ENCODE measurements at regions of chr1 and their contacts with region 1.

Region 1: GRCh38 chr1:6438047-6438525 is 13.5 kb downstream of the ESPN start:
- DNase-seq: peak; percentile 88
- H3K4me3 ChIP-seq: no peak overlapping the region; a peak in 1 of 4 replicates
- H3K27ac ChIP-seq: no peak overlapping the region
- H3K4me1 ChIP-seq: no peaks in the 10 kb centered on the region; a peak in 1 of 4 replicates
- H3K27me3 ChIP-seq: no peaks in the 10 kb centered on the region
- CTCF ChIP-seq: peak; percentile 83
- EP300 ChIP-seq: no peak
- RAD21 ChIP-seq: peak; percentile 70

Region 2: DNA sequence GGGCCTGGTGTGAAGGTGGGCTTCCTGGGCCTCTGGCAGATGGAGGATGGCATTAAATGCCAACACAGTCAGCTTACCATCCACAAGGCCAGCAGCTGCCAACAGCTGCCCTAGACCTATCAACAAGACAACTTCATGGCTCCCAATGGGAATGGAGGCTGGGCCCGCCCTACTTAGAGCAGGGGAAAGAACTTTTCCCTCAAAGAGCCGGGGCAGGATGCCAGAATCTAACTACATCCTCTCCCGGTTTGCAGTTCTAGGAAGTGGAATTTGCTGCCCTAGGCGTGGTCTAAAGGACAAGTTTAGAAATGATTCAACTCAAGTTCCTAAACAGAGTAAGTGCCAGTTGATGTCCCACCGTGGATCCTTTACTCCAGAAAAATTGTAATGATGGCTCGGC is 215.4 kb before region 1 on chr1:
- CTCF ChIA-PET with region 1: no interaction called
- POLR2A ChIA-PET with region 1: no interaction called
- DNase-seq: no peak
- H3K4me3 ChIP-seq: no peak overlapping the region
- H3K27ac ChIP-seq: no peak overlapping the region
- H3K4me1 ChIP-seq: no peaks in the 10 kb centered on the region
- H3K27me3 ChIP-seq: no peaks in the 10 kb centered on the region
- CTCF ChIP-seq: no peak
- EP300 ChIP-seq: no peak
- RAD21 ChIP-seq: no peak

Region 3: DNA sequence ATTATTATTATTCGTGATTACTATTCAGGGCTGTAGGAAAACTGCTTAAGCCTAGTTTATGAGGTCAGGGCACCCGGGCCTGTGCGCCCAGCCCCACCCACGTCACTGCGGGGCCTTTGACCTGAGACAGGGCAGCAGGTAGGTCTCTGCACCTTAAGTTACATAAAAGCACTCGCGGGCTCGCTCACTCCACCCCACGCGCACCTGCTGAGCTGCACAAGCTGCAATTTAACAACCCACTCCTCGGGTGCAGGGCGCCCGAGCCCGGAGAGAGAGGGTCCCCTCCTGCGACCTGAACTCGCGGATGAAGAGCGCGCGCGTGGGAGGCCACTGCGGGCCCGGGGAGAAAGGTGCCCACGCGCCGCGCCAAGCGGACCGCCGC is 202.8 kb before region 1 on chr1:
- CTCF ChIA-PET with region 1: interaction called, 19 read pairs
- POLR2A ChIA-PET with region 1: no interaction called
- DNase-seq: no peak
- H3K4me3 ChIP-seq: peak overlapping the region; percentile 66 to 79
- H3K27ac ChIP-seq: peak overlapping the region in 1 of 2 experiments; percentile 77; a peak in 2 of 4 replicates
- H3K4me1 ChIP-seq: peaks cover 0 to 9% of the 10 kb centered on the region in 2 experiments; a peak in 1 of 4 replicates
- H3K27me3 ChIP-seq: no peaks in the 10 kb centered on the region
- CTCF ChIP-seq: no peak
- EP300 ChIP-seq: no peak
- RAD21 ChIP-seq: no peak

Region 4: GRCh38 chr1:6359216-6360116 is 78.6 kb before region 1 on chr1:
- CTCF ChIA-PET with region 1: interaction called, 108 read pairs
- POLR2A ChIA-PET with region 1: no interaction called
- DNase-seq: peak; percentile 81
- H3K4me3 ChIP-seq: no peak overlapping the region
- H3K27ac ChIP-seq: peak overlapping the region; percentile 69 to 79
- H3K4me1 ChIP-seq: peaks cover 10 to 67% of the 10 kb centered on the region in 2 experiments
- H3K27me3 ChIP-seq: no peaks in the 10 kb centered on the region
- CTCF ChIP-seq: 0 out of 2 replicates have a peak, but pooled peaks have one; percentile 11
- EP300 ChIP-seq: peak in 1 of 2 experiments; percentile 37; a peak in 1 of 4 replicates
- RAD21 ChIP-seq: no peak; the same call in 1 of the 2 replicates

Region 5: GRCh38 chr1:6401673-6402072 is 36.4 kb before region 1 on chr1:
- CTCF ChIA-PET with region 1: interaction called, 14 read pairs
- POLR2A ChIA-PET with region 1: no interaction called
- DNase-seq: no peak
- H3K4me3 ChIP-seq: no peak overlapping the region
- H3K27ac ChIP-seq: no peak overlapping the region
- H3K4me1 ChIP-seq: no peaks in the 10 kb centered on the region
- H3K27me3 ChIP-seq: no peaks in the 10 kb centered on the region
- CTCF ChIP-seq: no peak
- EP300 ChIP-seq: no peak
- RAD21 ChIP-seq: no peak

Region 6: DNA sequence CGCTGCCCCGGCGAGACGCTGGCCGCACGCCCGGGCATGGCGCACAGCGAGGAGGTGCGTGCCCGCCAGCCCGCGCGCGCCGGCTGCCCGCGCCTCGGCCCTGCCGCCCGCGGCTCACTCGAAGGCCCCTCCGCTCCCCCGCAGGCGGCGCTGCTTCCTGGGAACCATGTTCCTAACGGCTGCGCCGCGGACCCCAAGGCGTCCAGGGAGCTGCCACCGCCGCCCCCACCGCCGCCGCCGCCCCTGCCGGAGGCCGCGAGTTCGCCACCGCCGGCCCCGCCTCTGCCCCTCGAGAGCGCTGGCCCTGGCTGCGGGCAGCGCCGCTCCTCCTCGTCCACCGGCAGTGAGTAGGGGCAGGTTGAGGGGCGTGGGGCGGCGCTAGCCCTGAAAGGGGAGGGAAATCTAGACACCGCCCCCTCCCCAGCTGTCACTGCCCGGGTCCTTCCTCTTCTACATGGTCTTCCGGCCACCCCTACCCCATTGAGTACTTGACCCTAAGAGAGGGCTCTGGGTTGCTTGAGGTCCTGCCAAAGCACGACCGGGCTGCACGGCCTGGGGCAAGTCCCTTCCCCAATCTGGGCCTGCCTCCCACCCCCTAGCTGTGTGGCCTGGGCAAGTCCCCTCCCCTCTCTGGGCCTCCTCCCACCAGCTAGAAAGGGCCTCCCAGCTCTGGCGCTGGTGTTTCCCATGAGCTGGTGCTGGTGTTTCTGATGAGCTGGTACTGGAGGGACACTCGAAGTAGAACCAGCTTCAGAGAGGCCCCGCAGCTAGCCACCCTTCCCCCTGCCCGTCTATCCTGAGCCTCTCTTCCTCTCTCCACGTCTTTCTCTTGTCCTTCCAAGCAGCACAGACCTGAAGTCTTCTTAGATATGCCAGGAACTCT is 10.9 kb after region 1 on chr1:
- CTCF ChIA-PET with region 1: interaction called, 70 read pairs
- POLR2A ChIA-PET with region 1: no interaction called
- DNase-seq: peak; percentile 78
- H3K4me3 ChIP-seq: peak overlapping the region in 1 of 2 experiments; percentile 12; a peak in 1 of 4 replicates
- H3K27ac ChIP-seq: no peak overlapping the region
- H3K4me1 ChIP-seq: no peaks in the 10 kb centered on the region; a peak in 1 of 4 replicates
- H3K27me3 ChIP-seq: peaks cover 44% of the 10 kb centered on the region
- CTCF ChIP-seq: no peak
- EP300 ChIP-seq: no peak
- RAD21 ChIP-seq: no peak

Region 7: DNA sequence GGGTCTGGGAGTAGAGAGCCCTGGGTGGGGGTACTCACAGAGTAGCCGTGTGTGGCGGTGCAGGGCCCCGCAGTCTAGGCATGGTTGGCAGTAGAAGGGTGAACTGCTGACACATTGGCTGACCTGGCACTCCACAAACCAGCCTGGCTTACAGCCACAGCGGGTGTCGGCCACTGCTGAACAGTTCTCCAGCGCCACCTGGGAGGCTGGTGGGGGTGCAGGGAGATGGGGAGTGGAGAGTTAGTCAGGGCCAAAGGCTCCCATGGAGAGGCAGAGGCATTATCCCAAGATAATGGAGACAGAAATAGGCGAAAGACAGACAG is 26.4 kb after region 1 on chr1:
- CTCF ChIA-PET with region 1: interaction called, 11 read pairs
- POLR2A ChIA-PET with region 1: interaction called, 3 read pairs
- DNase-seq: no peak
- H3K4me3 ChIP-seq: no peak overlapping the region
- H3K27ac ChIP-seq: no peak overlapping the region
- H3K4me1 ChIP-seq: no peaks in the 10 kb centered on the region
- H3K27me3 ChIP-seq: no peaks in the 10 kb centered on the region
- CTCF ChIP-seq: no peak
- EP300 ChIP-seq: no peak
- RAD21 ChIP-seq: no peak

Region 8: DNA sequence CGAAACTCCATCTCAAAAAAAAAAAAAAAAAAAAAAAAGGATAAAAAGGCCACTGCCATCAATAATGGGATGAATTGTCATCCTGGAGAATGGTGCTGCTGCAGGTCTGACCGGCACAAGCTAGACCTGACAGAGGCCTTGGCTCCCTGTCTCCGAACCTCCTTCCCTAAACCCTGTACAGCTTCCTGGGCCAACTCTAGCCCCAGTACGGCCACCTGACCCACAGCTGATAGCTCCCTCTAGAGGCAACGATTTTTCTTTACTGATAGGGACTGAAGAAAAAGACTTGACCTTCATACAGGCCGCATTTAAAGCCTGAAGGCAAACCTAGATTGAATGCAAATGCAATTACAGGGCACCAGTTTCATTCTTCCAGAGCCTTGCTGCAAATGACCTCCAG is 85.5 kb after region 1 on chr1:
- CTCF ChIA-PET with region 1: interaction called, 11 read pairs
- POLR2A ChIA-PET with region 1: no interaction called
- DNase-seq: peak; percentile 77
- H3K4me3 ChIP-seq: no peak overlapping the region
- H3K27ac ChIP-seq: peak overlapping the region in 1 of 2 experiments; percentile 39; a peak in 2 of 4 replicates
- H3K4me1 ChIP-seq: peaks cover 0 to 28% of the 10 kb centered on the region in 2 experiments; a peak in 2 of 4 replicates
- H3K27me3 ChIP-seq: no peaks in the 10 kb centered on the region
- CTCF ChIP-seq: peak; percentile 69
- EP300 ChIP-seq: no peak
- RAD21 ChIP-seq: peak; percentile 88